ENCODE measurements at regions of chr1 and their contacts with region 1.

Region 1: GRCh38 chr1:220368461-220369275 is 96.4 kb upstream of the RAB3GAP2 start:
- DNase-seq: no peak
- ATAC-seq: no peak
- H3K4me3 ChIP-seq: no peak overlapping the region
- H3K27ac ChIP-seq: peak overlapping the region; percentile 76
- H3K4me1 ChIP-seq: peaks cover 31% of the 10 kb centered on the region
- H3K27me3 ChIP-seq: no peaks in the 10 kb centered on the region
- CTCF ChIP-seq: no peak

Region 2: DNA sequence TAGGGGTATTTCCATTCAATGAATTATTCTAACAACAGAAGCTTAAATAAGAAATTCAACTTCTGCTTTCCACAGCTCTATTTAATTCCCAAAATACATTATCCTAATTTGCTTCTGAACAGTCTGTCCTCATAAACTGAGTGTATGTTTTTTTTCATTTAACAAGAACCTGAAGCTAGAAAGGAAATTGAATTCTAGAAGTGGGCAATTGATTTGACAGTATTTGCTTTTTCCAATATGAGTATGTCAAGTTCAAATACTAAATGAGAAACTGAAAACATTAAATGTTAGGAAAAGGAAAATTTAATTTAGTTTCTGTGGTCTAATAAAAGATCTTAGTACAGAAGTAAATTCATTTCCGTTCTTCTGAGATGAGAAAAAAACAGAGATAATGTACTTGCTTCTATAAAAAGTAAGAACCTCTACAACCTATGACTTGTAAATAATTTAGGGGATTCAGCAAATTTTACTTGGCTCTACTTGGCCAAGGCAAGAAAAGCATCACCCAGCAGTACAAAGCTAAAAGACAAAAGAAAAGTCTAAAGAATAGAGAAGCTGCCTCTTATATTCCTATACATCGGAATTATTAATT is 127.5 kb before region 1 on chr1:
- intact Hi-C with region 1: no loop called
- DNase-seq: no peak
- ATAC-seq: no peak
- H3K4me3 ChIP-seq: no peak overlapping the region
- H3K27ac ChIP-seq: no peak overlapping the region
- H3K4me1 ChIP-seq: peaks cover 18% of the 10 kb centered on the region
- H3K27me3 ChIP-seq: no peaks in the 10 kb centered on the region
- CTCF ChIP-seq: no peak

Region 3: GRCh38 chr1:220527908-220528678 is 159.4 kb after region 1 on chr1 and contains the start of gene MARK1:
- intact Hi-C with region 1: loop called in 1 of 2 experiments (anchors 5 kb)
- DNase-seq: peak; percentile 67 to 85
- ATAC-seq: peak; percentile 77 to 88 (median 80)
- H3K4me3 ChIP-seq: peak within 1 kb of the TSS; percentile 87
- H3K27ac ChIP-seq: peak within 1 kb of the TSS; percentile 75
- H3K4me1 ChIP-seq: no peaks in the 10 kb centered on the region
- H3K27me3 ChIP-seq: peaks cover 0 to 15% (median 0%) of the 10 kb centered on the region in 3 donors
- CTCF ChIP-seq: no peak
- total RNA-seq, gene MARK1: 2.1 to 5.4 (median 3.8) TPM